Sciatic nerve (tissue), 2 donors: ENCODE measurements at regions of chr12 and their contacts with region 1.

Region 1: GRCh38 chr12:84874125-84874824 is 38.3 kb downstream of the SLC6A15 start:
- DNase-seq: no peak
- ATAC-seq: peak; percentile 78

Region 2: DNA sequence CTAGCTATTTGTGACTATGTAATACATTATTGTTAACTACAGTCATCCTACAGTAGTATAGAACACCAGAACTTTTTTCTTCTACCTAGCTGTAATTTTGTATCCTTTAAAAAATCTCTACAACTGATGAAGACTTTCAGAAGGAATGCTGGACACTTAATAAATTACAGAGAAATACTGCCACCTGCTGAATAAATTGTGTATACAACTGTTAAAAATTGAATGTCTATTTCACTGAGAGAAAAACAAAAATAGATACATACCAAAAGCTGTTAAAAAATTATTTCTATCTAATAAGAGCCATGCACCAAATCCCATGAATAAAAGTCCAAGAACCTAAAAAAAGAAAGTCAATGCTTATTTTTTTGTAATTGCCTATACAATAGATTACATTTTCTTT is 155.2 kb after region 1 on chr12:
- intact Hi-C with region 1: loop called (anchors 10 kb)
- DNase-seq: no peak
- ATAC-seq: peak; percentile 51